Heart right ventricle (tissue), 16 donors: ENCODE measurements at regions of chr11 and their contacts with region 1.

Region 1: DNA sequence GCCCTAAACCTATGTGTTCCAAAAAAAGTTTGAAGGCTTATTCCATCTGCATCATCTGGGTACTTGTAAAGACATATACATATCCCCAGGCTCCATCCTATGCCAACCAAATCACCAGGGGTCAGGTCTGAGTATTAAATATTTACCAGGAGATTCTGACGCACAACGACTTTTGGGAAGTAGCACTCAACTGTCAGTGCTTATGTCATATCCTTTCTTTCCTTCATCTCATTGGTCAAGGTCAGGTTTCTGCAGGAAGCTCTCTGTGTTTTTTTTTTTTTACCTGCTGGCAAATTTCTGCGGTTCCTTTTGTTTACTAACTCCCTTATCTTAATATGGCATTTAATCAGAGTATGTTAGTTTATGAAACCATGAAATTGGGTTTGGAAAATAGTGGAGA is 22.5 kb upstream of the CYP2R1 start:
- DNase-seq: no peak
- ATAC-seq: no peak
- H3K4me3 ChIP-seq: no peak overlapping the region
- H3K27ac ChIP-seq: no peak overlapping the region
- H3K4me1 ChIP-seq: no peaks in the 10 kb centered on the region
- H3K27me3 ChIP-seq: peaks cover 0 to 15% (median 0%) of the 10 kb centered on the region in 7 donors
- CTCF ChIP-seq: no peak

Region 2: DNA sequence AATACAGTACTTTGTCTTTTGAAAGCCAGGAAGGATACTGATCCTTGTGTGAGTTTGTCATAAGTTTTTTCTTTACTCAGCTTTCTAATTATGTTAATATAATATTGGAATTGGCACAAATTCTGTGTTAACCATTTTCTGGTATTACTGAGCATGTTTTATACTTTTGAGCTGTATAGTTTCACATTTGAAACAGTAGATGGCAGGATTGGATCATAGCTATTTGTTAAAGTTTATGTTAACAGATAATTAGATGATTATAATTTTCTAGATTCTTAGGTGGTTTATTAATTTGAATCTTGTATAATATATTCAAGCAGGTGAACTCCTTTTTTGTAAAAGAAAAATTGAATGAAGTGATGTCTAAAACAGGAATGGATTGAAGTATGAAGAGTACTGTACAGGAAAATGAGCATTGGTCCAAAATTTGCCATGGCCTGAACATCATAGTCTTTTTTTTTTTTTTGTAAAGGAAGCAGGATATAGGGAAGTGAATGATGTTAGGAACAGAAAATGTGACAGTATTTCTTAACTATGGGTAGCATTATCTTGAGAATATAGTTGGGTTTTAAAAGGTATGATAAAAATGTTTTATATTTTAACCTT is 124.6 kb before region 1 on chr11:
- intact Hi-C with region 1: loop called in 5 of 10 experiments (anchors 5 to 10 kb)
- DNase-seq: no peak
- ATAC-seq: no peak
- H3K4me3 ChIP-seq: no peak overlapping the region
- H3K27ac ChIP-seq: no peak overlapping the region
- H3K4me1 ChIP-seq: peaks cover 0 to 10% (median 0%) of the 10 kb centered on the region in 9 donors
- H3K27me3 ChIP-seq: no peaks in the 10 kb centered on the region
- CTCF ChIP-seq: peak in 7 of 9 donors; percentile 34 to 60 (median 48)

Region 3: DNA sequence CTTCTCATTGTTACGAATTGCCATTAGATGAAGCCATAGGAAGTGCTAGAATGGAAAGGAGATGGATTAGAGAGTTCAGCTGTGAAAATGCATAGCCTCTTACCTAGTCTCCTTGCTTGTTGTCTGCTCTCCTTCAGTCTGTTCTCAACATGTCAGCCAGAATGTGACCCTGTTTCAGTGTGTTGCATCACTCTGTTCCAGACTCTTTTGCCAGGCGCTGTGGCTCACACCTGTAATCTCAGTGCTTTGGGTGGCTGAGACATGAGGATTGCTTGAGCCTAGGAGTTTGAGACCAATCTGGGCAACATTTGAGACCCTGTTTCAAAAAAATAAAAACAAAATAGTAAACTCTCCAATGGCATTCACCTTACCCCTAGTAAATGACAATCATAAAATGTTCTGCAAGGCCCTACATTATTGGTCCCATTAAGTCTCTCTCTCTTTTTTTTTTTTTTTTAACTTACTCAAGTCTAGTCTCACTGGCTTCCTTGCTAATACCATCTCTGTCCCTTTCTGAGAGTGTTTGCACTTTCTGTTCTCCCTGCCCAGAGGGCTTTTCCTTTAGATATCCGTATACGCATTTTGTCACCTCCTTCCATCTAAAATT is 61.9 kb before region 1 on chr11:
- intact Hi-C with region 1: no loop called
- DNase-seq: no peak
- ATAC-seq: no peak
- H3K4me3 ChIP-seq: no peak overlapping the region
- H3K27ac ChIP-seq: no peak overlapping the region
- H3K4me1 ChIP-seq: no peaks in the 10 kb centered on the region
- H3K27me3 ChIP-seq: no peaks in the 10 kb centered on the region
- CTCF ChIP-seq: no peak

Region 4: DNA sequence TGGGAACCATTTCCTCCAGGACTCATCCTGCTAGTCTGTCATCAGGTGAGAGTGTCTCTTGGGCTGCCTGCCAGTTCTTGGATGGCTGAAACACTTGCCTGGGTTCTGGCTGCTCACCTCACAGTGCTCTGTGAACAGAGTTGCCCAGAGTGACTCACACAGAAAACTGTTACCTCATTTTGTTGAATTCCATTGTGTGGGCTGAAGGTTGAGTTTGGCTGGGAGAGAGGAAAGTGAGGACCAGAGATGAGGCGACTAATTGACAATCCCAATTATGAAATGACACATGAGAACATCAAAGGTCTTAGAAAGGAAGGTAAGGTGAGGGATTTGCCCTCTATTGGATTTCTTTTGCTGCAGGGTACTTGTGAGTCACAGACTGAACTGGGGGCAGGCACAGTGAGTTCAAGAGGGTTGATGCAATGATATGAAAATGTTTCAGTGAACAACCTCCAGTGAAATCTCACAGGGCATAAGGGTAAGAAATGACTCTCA is 138.7 kb after region 1 on chr11:
- intact Hi-C with region 1: no loop called
- DNase-seq: no peak
- ATAC-seq: no peak
- H3K4me3 ChIP-seq: no peak overlapping the region
- H3K27ac ChIP-seq: no peak overlapping the region
- H3K4me1 ChIP-seq: no peaks in the 10 kb centered on the region
- H3K27me3 ChIP-seq: peaks cover 0 to 23% (median 6%) of the 10 kb centered on the region in 7 donors
- CTCF ChIP-seq: no peak